Activated CD4-positive, alpha-beta T cell treated with anti-CD3 and anti-CD28 coated beads for 36 hours (primary cell): ENCODE measurements at regions of chr5 and their contacts with region 1.

Region 1: DNA sequence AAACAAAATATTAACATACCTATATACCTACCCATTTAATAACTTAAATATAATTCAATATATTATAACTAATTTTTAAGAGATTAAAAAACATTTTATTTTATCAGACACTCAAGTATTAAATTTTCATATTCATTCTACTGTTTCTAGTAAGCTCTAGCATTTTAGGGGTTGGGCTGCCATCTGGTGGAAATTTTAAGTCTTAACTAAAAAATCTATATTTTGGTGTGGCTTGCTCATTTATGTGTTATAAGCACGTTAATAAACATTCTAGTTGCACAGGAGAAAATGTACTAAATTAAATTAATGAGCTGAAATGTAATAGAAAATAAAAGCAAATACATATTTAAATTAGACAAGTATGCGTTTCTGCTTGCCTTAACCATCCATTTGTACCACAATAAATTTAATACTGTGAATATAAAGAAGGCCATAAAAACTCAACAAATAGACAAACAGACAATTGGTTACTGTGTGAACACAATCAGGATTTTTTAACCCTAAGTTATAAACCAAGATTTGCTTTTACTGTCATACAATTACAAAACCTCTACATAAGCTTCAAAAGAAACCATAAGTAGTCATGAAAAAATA is 1728.3 kb upstream of the CDH9 start:
- DNase-seq: peak; percentile 11
- ATAC-seq: no peak
- H3K4me3 Mint-ChIP-seq: no peak overlapping the region
- H3K27ac Mint-ChIP-seq: no peak overlapping the region
- H3K4me1 Mint-ChIP-seq: no peaks in the 10 kb centered on the region
- H3K27me3 Mint-ChIP-seq: no peaks in the 10 kb centered on the region

Region 2: GRCh38 chr5:27708579-27708978 is 1058.1 kb before region 1 on chr5:
- CTCF ChIA-PET with region 1: no interaction called
- POLR2A ChIA-PET with region 1: no interaction called
- intact Hi-C with region 1: no loop called
- DNase-seq: no peak
- ATAC-seq: no peak
- H3K4me3 Mint-ChIP-seq: no peak overlapping the region
- H3K27ac Mint-ChIP-seq: no peak overlapping the region
- H3K4me1 Mint-ChIP-seq: no peaks in the 10 kb centered on the region
- H3K27me3 Mint-ChIP-seq: no peaks in the 10 kb centered on the region

Region 3: DNA sequence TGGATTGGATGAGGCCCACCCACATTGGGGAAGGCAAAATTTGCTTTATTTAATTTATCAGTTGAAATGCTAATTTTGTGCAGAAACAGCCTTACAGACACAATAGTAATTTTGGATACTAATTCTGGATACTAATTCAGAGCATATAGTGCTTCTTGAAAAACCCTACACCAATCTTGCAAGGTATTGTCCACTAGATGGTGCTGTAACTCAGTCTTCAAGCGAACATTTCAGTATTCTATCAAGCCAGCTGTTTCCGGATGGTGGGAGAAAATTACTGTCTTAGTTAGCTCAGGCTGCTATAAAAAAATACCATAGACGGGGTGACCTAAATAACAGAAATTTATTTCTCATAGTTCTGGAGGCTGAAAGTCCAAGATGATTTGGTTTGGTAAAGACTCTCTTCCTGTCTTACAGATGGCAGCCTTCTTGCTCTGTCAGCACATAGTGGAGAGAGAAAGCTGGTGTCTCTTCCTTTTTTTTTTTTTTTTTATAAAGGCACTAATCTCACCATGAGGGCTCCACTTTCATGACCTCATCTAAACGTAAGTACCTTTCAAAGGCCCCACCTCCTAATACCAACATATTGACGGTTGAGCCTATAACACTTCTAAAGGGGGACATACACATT is 421.7 kb before region 1 on chr5:
- CTCF ChIA-PET with region 1: no interaction called
- POLR2A ChIA-PET with region 1: no interaction called
- intact Hi-C with region 1: loop called in 1 of 2 experiments (anchors 2 kb)
- DNase-seq: no peak
- ATAC-seq: no peak
- H3K4me3 Mint-ChIP-seq: no peak overlapping the region
- H3K27ac Mint-ChIP-seq: no peak overlapping the region
- H3K4me1 Mint-ChIP-seq: no peaks in the 10 kb centered on the region
- H3K27me3 Mint-ChIP-seq: no peaks in the 10 kb centered on the region

Region 4: DNA sequence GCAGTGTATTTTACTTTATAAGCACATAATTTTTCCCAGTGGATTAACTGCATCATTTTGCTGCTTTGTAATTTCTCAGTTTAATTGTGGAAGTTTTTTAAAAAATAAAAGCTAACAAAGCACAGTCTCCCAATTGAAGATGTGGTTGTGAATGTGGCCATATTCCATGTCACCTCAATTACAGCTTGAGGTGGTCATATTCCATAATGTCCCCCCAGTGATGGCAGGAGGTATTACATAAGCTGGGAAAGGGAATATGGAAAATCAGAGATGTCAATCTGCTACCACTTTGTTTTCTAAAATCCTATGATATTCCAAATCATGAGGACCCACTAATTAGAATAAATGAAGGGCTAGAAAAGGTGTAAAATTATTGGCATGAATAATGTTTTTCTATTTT is 56.3 kb before region 1 on chr5:
- CTCF ChIA-PET with region 1: no interaction called
- POLR2A ChIA-PET with region 1: no interaction called
- intact Hi-C with region 1: no loop called
- DNase-seq: no peak
- ATAC-seq: no peak
- H3K4me3 Mint-ChIP-seq: no peak overlapping the region
- H3K27ac Mint-ChIP-seq: no peak overlapping the region
- H3K4me1 Mint-ChIP-seq: no peaks in the 10 kb centered on the region
- H3K27me3 Mint-ChIP-seq: no peaks in the 10 kb centered on the region